Activated T-helper 1 cell treated with anti-CD3 and anti-CD28 coated beads, Interleukin-12 subunit alpha, Interleukin-12 subunit beta, Interleukin-2, Interleukin-4 antibody, amounts not matched to agents 30 ng/mL and 10 ng/mL and 1 ng/mL, durations not matched to agents 14 hours and 24 hours and 36 hours (primary cell): ENCODE measurements at regions of chr1 and their contacts with region 1.

Region 1: DNA sequence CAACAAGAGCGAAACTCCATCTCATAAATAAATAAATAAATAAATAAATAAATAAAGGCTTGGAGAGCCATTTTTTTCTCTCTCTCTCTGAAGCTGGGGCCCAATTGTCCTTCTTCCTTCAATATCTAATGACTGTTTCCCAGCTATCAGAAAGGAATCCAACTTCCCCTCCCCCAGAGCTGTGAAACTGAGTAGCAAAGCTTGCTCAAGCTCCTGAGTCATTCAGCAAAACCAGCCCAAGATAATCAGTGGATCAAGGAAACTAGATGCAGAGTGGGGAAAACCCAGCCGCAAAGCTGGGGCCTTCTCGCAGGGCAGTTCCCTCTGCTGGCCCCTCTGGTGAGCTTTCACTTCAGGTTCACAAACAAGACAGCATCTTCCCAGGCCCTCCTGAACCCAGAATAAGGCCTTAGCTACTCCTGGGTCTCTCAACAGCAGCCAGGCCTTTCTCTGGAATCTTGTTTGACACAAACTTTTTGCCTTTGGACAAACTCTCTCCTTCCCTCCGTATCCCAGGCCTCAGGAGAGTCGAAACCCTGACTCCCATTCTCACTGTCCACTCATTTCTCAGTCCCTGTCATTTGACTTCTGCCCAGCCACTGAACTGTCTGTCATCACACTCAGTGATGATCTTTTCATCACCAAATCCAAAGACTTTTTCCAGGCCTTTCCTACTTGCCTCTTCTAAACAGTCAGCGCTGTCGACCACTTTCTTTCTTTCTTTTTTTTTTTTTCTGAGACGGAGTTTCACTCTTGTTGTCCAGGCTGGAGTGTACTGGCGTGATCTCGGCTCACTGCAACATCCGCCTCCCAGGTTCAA is 18.0 kb upstream of the PTP4A2 start:
- DNase-seq: peak; percentile 84
- H3K4me3 Mint-ChIP-seq: peak overlapping the region; percentile 59
- H3K27ac Mint-ChIP-seq: peak overlapping the region; percentile 83
- H3K4me1 Mint-ChIP-seq: peaks cover 78% of the 10 kb centered on the region
- H3K27me3 Mint-ChIP-seq: no peaks in the 10 kb centered on the region

Region 2: DNA sequence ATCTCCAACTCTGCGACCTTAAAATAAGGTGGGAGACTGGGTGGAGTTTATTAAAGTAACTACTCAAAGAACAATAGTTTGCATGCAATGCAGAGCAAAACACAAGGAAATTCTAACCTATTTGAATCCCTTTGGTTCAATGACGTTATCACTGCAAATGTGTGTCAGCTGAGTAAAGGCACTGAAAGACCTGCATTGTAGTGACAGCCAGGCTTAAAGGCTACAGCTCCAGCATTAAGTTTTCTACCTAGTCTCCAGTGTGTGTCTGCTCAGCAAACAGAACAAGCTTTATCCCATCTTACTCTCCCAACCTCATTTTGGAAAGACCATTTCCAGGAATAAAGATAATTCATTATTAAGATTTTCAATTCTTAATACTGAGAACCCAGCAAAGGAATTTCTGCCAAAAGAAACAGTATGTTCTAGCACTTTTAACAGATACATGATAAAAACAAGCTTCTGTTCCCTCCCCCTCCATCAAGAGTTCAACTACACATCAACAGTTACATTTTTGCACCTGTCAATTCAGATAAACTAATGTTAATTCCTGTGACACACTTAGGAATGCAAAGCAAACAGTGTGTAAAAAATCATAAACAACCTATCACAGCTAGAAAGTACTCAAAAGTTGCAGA is 32.1 kb before region 1 on chr1:
- intact Hi-C with region 1: loop called (anchors 1 kb)
- DNase-seq: no peak
- H3K4me3 Mint-ChIP-seq: peak overlapping the region; percentile 68
- H3K27ac Mint-ChIP-seq: peak overlapping the region; percentile 88
- H3K4me1 Mint-ChIP-seq: peaks cover 83% of the 10 kb centered on the region
- H3K27me3 Mint-ChIP-seq: no peaks in the 10 kb centered on the region